CD14-positive monocyte (primary cell): ENCODE measurements at regions of chr20 and their contacts with region 1.

Region 1: DNA sequence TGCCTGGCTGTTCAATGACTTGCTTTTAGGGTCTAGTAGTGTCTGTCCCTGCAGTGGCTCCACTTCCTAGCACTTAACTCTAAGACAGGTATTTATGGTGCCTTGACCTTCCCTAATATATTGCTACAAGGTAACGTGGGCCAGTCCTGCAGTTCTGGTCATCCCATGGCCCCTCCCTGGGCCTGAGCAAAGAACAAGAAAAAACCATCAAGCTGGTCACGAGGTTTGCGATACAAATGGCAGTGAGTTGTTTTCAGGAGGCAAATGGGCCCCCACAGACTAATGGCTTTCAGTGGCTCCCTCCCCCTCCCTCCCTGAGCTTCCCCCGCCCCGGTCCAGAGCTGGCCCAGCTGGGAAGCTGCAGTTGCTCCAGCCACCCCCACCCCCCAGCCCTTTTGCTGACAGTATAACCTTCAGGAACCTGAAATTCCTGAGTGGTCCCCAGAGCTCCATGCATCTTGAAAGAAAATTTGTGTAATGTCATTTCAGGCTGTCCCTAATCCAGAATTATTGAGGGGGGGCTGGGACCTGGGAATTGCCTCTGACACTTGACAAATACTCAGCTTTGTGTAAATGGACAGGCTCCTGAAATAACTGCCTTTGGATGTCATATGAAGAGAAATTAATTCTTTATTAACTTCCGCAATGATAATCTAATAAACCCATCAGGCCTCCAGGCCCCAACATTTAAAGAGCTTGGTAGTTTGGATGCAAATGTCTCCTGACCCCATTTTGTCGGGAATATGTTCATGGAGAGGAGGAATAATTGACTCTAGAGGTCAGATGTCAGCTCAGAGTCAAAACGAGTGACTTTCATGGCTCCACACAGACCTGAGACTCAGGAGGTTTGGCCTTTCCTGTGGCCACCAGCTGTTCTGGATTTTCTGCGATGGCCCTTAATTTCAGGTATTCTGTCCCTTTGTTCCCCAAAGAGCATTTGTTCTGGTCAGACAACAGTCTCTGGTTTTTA is 153.2 kb upstream of the TOP1 start:
- DNase-seq: no peak
- H3K4me3 ChIP-seq: no peak overlapping the region
- H3K4me3 Mint-ChIP-seq: no peak overlapping the region
- H3K27ac ChIP-seq: no peak overlapping the region
- H3K27ac Mint-ChIP-seq: no peak overlapping the region
- H3K4me1 ChIP-seq: peaks cover 2% of the 10 kb centered on the region in 2 donors
- H3K4me1 Mint-ChIP-seq: peaks cover 5% of the 10 kb centered on the region
- H3K27me3 ChIP-seq: no peaks in the 10 kb centered on the region
- H3K27me3 Mint-ChIP-seq: peaks cover 0 to 5% (median 3%) of the 10 kb centered on the region in 3 donors
- CTCF ChIP-seq: no peak

Region 2: DNA sequence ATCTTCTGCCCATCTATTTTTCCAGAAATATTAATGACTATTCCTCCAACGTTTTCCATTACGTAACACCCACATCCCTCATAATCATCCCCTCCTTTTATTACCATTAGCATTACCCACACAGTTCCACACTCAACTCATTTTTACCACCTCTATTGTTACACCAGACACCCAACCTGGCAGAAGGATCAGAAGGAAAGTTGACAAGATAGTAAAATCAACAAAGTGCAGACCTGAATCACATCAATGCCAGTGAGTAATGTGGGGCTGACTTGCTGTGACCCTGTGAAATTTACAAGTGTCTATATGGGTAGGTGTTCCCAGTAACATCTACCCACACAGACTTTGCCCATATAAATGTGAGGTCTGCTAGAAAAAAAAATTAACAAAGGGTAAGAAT is 754.6 kb before region 1 on chr20:
- intact Hi-C with region 1: loop called in 1 of 2 experiments (anchors 5 kb)
- DNase-seq: no peak
- H3K4me3 ChIP-seq: no peak overlapping the region
- H3K4me3 Mint-ChIP-seq: no peak overlapping the region
- H3K27ac ChIP-seq: no peak overlapping the region
- H3K27ac Mint-ChIP-seq: no peak overlapping the region
- H3K4me1 ChIP-seq: no peaks in the 10 kb centered on the region
- H3K4me1 Mint-ChIP-seq: no peaks in the 10 kb centered on the region
- H3K27me3 ChIP-seq: peaks cover 0 to 2% of the 10 kb centered on the region in 2 donors
- H3K27me3 Mint-ChIP-seq: peaks cover 2 to 8% (median 4%) of the 10 kb centered on the region in 3 donors
- CTCF ChIP-seq: no peak

Region 3: GRCh38 chr20:41057999-41058896 is 182.8 kb after region 1 on chr20:
- intact Hi-C with region 1: no loop called
- DNase-seq: peak in 1 of 3 donors; percentile 47
- H3K4me3 ChIP-seq: no peak overlapping the region
- H3K4me3 Mint-ChIP-seq: no peak overlapping the region
- H3K27ac ChIP-seq: peak overlapping the region in 1 of 2 donors; percentile 0
- H3K27ac Mint-ChIP-seq: peak overlapping the region in 3 of 7 donors; percentile 63 to 74 (median 69)
- H3K4me1 ChIP-seq: peaks cover 0 to 12% of the 10 kb centered on the region in 2 donors
- H3K4me1 Mint-ChIP-seq: peaks cover 26% of the 10 kb centered on the region
- H3K27me3 ChIP-seq: no peaks in the 10 kb centered on the region
- H3K27me3 Mint-ChIP-seq: no peaks in the 10 kb centered on the region
- CTCF ChIP-seq: no peak